PC-9 (cell line): ENCODE measurements at regions of chr22 and their contacts with region 1.

Region 1: GRCh38 chr22:27668828-27669797 is 132.4 kb downstream of the MN1 start:
- DNase-seq: peak; percentile 87 to 94
- H3K4me3 ChIP-seq: peak overlapping the region; percentile 17; the same call in 1 of the 2 replicates
- H3K27ac ChIP-seq: peak overlapping the region; percentile 86
- H3K4me1 ChIP-seq: peaks cover 44% of the 10 kb centered on the region
- H3K27me3 ChIP-seq: no peaks in the 10 kb centered on the region
- CTCF ChIP-seq: no peak

Region 2: GRCh38 chr22:26822299-26822698 is 846.8 kb before region 1 on chr22:
- CTCF ChIA-PET with region 1: no interaction called
- POLR2A ChIA-PET with region 1: interaction called, 16 read pairs
- intact Hi-C with region 1: no loop called
- DNase-seq: no peak
- H3K4me3 ChIP-seq: no peak overlapping the region
- H3K27ac ChIP-seq: no peak overlapping the region
- H3K4me1 ChIP-seq: no peaks in the 10 kb centered on the region
- H3K27me3 ChIP-seq: 0 out of 2 replicates have a peak, but pooled peaks cover 4% of the 10 kb centered on the region
- CTCF ChIP-seq: no peak

Region 3: DNA sequence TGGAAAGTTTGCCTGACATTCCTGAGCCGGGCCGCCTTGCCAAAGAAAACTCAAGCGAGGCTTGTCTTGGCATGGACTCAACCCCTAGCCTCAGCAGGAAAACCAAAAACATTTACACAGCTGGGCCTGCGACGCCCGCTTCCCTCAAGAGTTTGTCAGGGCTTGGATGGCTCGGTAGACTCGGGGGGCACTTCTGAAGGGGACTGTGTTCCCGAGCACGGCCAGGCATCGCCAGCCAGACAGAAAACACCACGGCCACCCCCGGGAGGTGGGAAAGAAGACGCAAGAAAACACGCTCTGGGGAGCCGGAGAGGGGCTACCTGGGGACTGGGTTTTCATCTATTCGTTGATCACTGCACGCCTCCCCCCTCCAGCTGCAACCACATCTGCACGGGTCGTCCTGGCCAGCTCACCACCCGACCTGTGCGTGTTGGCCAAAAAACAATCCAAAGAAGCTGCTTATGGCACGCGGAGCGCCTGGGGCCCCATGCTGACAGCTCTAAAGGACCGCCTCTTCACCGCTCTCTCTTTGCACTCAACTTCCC is 248.2 kb before region 1 on chr22:
- CTCF ChIA-PET with region 1: no interaction called
- POLR2A ChIA-PET with region 1: interaction called, 12 read pairs
- intact Hi-C with region 1: no loop called
- DNase-seq: peak in 1 of 2 experiments; percentile 44
- H3K4me3 ChIP-seq: no peak overlapping the region
- H3K27ac ChIP-seq: no peak overlapping the region
- H3K4me1 ChIP-seq: no peaks in the 10 kb centered on the region
- H3K27me3 ChIP-seq: no peaks in the 10 kb centered on the region
- CTCF ChIP-seq: no peak

Region 4: DNA sequence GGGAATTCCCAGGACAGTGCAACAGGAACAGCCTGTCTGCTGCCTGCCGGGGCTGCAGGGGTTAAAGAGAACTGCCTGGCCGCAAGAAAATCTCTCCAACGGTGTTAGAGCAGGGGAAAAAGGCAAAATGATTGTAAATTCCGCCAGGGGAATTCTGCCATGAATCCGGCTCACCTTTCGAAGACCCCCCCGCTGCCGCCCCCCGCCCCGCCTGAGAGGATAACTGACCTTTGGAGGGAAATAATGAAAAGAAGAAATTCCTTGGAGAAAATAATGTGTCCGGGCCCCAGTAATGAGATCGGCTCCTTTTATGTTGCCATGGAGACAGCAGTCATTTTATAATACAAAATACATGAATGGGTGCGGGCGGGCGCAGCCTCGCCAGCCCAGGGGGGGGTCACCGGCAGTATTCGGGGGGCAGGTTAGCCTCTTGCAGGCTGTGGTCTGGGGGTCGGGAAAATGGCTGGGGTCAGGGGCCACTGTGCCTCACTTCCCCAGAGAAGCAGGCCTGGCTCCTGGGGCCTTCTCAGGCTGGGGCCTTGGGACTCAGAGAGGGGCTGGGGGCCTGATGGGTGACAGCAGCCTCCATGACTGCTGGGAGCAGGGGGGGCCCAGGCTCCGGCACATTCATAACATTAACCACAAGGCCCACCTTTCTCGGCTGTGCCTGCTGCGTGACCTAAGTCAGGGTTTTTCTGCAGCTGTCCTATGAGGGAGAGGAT is 95.7 kb before region 1 on chr22:
- CTCF ChIA-PET with region 1: no interaction called
- POLR2A ChIA-PET with region 1: no interaction called
- intact Hi-C with region 1: no loop called
- DNase-seq: no peak
- H3K4me3 ChIP-seq: no peak overlapping the region
- H3K27ac ChIP-seq: no peak overlapping the region
- H3K4me1 ChIP-seq: no peaks in the 10 kb centered on the region
- H3K27me3 ChIP-seq: peaks cover 15% of the 10 kb centered on the region; the same call in 1 of the 2 replicates
- CTCF ChIP-seq: no peak

Region 5: DNA sequence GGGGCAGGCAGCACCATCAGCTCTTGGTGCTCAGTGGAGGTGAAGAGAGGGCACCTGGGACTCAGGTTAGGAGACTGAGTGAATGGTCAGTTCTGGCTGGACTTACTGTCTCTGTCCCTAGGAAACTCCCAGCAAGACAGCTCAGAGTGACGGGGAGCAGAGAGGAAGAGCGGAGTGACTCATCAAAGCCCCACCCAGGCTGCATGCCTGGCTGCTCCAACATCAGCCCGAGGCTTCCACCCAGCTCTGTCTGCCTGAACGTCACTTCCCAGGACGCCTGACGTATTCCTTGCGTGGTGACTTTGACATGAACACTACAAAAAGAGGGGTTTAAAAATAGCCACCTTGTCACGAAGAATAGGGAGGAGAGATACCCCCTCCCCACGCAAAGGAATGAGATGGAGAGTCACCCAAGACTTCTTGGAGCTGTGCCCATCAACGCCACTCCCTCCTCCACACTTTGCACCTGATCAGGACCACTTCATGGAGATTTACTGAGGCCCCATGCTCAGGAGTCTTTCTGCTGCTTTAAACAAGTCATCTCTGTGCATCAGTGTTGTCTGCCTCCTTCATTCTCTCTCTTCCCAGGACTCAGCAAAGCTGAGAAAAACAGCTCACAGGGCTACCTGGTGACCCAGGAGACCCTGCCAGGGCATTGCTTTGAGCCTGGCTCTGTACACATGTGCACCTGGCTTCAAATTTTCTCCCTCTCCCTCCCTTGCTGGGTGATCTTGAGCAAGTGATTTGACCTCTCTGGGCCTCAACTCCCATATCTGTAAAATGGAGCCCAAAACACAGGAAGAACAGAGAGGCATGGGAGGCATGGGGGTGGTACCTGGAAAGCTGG is 49.3 kb after region 1 on chr22:
- CTCF ChIA-PET with region 1: no interaction called
- POLR2A ChIA-PET with region 1: interaction called, 5 read pairs
- intact Hi-C with region 1: loop called (anchors 1 kb)
- DNase-seq: peak; percentile 74 to 87
- H3K4me3 ChIP-seq: peak overlapping the region; percentile 36; the same call in 1 of the 2 replicates
- H3K27ac ChIP-seq: peak overlapping the region; percentile 65
- H3K4me1 ChIP-seq: peaks cover 22% of the 10 kb centered on the region
- H3K27me3 ChIP-seq: no peaks in the 10 kb centered on the region
- CTCF ChIP-seq: no peak

Region 6: DNA sequence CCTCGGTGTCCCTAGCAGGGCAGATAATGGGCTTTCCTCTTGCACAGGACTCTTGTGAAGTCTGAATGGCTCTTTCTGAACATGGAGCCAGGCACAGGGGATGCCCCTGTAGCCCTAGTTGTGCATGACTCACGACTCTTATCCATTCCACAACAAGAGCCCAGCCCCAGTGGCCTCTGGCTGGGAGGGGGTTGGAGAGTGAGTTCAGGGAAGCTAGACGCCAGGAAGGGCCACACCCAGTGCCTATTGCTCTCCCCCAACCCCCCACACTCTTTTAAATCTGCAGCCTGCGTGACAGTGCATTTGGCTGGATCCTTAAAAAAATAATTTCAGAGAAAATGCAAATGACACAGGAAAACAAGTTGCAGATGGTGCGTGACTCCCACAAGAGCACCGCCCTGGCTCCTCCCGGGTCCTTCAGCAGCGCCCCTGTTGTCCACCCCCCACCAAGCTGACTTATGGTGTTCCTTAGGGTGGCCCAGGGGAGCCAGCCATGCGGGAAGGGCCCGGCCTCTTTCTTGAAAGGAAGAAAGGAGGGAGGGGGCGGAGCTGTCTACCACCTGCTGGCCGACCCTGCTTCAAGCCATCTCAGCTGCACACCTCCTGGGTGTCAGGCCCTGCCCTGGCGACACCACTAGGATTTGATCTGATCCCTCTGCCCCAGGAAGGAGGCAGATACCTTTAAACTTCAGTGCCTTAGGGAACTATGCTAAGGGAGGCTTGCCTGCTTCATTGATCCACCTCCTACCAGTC is 57.8 kb after region 1 on chr22:
- CTCF ChIA-PET with region 1: no interaction called
- POLR2A ChIA-PET with region 1: interaction called, 5 read pairs
- intact Hi-C with region 1: loop called (anchors 2 kb)
- DNase-seq: peak; percentile 83 to 84
- H3K4me3 ChIP-seq: peak overlapping the region; percentile 23; the same call in 1 of the 2 replicates
- H3K27ac ChIP-seq: peak overlapping the region; percentile 76
- H3K4me1 ChIP-seq: peaks cover 29% of the 10 kb centered on the region
- H3K27me3 ChIP-seq: no peaks in the 10 kb centered on the region
- CTCF ChIP-seq: no peak